Right cardiac atrium (tissue), 5 donors: ENCODE measurements at regions of chr17 and their contacts with region 1.

Region 1: GRCh38 chr17:50865984-50866774 is at the start of gene TOB1:
- DNase-seq: peak; percentile 99 to 100 (median 99)
- ATAC-seq: peak; percentile 95
- H3K4me3 ChIP-seq: peak within 1 kb of the TSS; percentile 95
- H3K27ac ChIP-seq: peak within 1 kb of the TSS; percentile 98
- H3K4me1 ChIP-seq: peaks cover 3% of the 10 kb centered on the region
- H3K27me3 ChIP-seq: no peaks in the 10 kb centered on the region
- total RNA-seq, gene TOB1: 51.0 to 73.2 (median 65.0) TPM

Region 2: DNA sequence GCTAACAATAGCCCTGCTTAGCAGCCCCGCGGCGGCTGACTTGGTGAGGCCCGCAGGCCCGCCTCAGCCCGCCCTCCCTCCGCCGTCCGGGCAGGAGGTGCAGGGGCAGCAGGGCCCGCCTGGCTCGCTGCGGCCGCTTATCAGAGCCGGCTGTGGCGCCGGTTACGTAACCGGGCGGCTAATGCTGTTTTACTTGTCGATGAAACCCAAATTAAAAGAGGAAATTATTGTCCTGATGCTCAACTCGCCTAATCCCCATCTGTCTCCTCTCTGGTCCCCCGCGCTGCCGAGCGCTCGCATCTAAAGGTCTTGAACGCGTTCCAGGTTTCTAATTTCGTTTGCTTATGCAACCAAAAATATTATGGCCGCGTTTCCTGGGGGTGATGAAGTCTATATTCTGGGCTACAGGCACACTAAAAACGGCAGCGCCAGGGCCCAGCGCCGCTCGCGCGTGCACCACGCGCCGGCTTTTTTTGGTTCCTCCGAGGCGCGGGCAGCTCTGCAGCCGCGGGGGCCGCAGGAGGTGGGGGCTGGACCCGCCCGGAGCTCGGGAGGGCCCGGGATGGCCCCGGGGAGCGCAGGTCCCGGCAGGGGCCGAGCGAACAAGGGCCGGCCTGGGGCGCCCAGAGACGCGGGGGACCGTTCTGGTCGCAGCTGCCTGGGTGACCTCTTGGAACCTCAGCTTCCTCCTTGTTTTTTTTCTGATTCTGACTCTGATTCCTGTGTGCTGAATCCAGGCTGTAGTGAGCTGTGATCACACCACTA is 65.1 kb after region 1 on chr17:
- intact Hi-C with region 1: loop called in 2 of 4 experiments (anchors 5 to 10 kb)
- DNase-seq: peak; percentile 90 to 96 (median 95)
- ATAC-seq: peak; percentile 95 to 96
- H3K4me3 ChIP-seq: peak overlapping the region; percentile 38
- H3K27ac ChIP-seq: peak overlapping the region; percentile 96
- H3K4me1 ChIP-seq: peaks cover 3% of the 10 kb centered on the region
- H3K27me3 ChIP-seq: no peaks in the 10 kb centered on the region